Right ventricle myocardium superior (tissue), 1 donor: ENCODE measurements at regions of chr1 and their contacts with region 1.

Region 1: GRCh38 chr1:59879574-59879973 is 47.0 kb downstream of the CYP2J2 start:
- DNase-seq: peak; percentile 57
- ATAC-seq: peak; percentile 91

Region 2: DNA sequence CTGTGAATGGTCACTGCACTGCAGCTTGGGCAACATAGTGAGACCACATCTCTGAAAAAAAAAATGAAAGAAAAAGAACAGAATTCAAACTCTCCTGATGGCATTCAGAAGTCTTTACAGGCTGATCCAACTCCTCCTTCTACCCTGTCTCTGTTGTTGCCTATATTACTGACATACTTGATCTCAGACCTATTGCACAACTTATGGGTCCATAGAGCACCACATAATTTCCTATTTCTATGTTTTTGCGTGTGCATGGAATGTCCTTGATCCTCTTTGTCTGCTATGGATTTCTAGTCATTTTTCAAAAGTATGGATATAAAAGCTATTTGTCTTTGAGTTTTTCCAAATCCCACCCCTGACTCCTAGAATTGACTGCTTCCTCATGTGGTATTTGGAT is 69.4 kb after region 1 on chr1:
- intact Hi-C with region 1: loop called (anchors 2 kb)
- DNase-seq: no peak
- ATAC-seq: no peak

Region 3: DNA sequence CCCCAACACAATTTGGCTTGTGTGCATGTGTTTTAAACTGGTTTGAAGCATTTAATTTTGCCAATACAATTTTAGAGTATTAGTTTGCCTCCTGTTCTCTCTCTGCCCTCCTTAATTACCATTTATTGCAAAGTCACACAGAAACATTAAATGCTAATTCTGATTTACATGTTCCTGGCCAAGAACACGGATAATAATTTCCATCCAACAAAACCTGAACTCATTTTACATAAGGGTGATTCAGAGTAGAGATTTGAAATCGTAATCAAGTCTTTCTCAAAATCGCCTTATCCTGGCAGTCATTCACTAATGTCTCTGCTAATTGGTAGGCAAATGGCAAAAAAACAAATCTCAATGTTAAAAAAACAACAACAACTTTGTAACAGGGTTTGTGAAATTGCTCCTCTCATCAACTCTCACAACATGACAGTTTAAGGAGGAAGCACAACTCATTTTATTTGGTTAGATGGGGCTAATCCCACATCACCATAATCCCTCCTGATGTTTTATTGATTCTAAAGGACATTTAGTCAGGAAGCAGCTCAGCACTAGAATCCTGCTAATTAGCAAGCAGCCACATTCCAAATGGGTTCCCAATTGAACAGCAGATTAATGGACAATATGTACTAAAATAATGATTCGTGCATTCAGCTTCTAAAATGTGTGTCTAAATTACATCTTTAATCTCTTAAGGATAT is 138.1 kb after region 1 on chr1:
- intact Hi-C with region 1: no loop called
- DNase-seq: no peak
- ATAC-seq: no peak